ENCODE measurements at regions of chr3 and their contacts with region 1.

Region 1: GRCh38 chr3:8622873-8623691 is 21.5 kb downstream of the SSUH2 start:
- ATAC-seq: peak; percentile 96 to 100 (median 100)
- H3K4me3 ChIP-seq: no peak overlapping the region
- H3K27ac ChIP-seq: no peak overlapping the region
- H3K4me1 ChIP-seq: peaks cover 6 to 11% of the 10 kb centered on the region in 2 donors

Region 2: DNA sequence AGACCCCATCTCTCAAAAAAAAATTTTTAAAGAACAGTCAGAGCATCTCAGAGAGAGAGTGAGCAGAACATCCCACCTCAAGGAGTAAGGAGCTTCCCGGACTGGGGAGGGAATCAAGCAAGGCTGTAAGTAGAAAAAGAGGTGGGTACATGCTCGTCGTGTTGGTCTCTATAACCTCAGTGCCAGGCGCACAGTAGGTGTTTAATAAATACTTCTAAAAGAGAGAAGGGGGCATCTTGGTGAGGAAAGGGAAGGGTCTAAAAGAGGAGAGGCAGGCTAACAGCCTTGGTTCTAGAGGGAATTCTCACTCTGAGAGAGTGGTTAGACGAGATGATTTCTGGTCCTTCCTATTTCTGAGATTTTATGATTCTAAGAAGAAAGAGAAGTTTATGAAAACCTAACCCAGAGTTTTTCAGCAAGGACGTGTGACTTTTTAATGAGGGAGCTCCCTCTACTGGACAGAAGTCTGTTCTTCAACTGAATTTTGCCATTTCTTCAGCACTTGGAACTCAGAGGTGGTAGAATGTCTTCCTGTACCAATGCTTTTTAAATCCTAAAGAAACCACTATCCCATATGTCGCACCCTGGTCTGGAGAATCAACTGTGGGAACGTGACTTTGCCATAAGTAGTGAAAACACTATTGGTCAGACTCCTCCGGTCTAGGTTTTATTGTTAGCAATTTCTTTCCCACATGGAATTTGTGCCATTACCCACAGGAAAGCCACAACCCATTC is 321.2 kb before region 1 on chr3:
- in situ Hi-C with region 1: loop called in 1 of 9 experiments (anchors 25 kb)
- ATAC-seq: peak in 4 of 8 experiments; percentile 33 to 67 (median 50)
- H3K4me3 ChIP-seq: no peak overlapping the region
- H3K27ac ChIP-seq: no peak overlapping the region
- H3K4me1 ChIP-seq: peaks cover 4 to 5% of the 10 kb centered on the region in 2 donors

Region 3: DNA sequence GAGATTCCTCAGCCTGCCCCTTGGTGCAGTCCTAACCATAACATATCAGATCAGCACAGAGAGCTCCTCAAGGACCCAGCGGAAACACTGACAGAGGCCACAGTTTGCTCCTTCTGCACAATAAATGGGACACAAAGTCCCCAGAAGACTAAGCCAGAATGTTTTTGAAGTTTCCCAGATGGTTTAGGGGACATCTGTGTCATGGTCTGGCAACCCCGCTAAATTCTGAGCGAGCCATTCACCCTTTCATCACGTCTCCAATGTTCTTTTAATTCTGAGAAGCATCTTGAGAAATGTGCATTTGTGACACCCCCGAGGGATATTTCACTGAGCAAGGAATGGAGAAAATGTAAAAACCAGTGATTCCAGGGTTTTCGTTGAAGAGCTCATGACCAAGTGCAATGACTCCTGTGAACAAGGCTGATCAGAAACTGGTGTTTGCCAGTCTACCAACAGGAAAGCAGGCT is 186.3 kb before region 1 on chr3:
- in situ Hi-C with region 1: loop called in 5 of 9 experiments (anchors 10 to 25 kb)
- ATAC-seq: peak in 2 of 8 experiments; percentile 41 to 63
- H3K4me3 ChIP-seq: no peak overlapping the region
- H3K27ac ChIP-seq: no peak overlapping the region
- H3K4me1 ChIP-seq: no peaks in the 10 kb centered on the region

Region 4: GRCh38 chr3:8441969-8442559 is 181.0 kb before region 1 on chr3:
- in situ Hi-C with region 1: loop called in 5 of 9 experiments (anchors 10 to 25 kb)
- ATAC-seq: peak in 3 of 8 experiments; percentile 6 to 58 (median 10)
- H3K4me3 ChIP-seq: no peak overlapping the region
- H3K27ac ChIP-seq: no peak overlapping the region
- H3K4me1 ChIP-seq: peaks cover 19% of the 10 kb centered on the region in 2 donors

Region 5: GRCh38 chr3:8776406-8776805 is 153.3 kb after region 1 on chr3:
- in situ Hi-C with region 1: no loop called
- ATAC-seq: no peak
- H3K4me3 ChIP-seq: no peak overlapping the region
- H3K27ac ChIP-seq: no peak overlapping the region
- H3K4me1 ChIP-seq: no peaks in the 10 kb centered on the region

Region 6: DNA sequence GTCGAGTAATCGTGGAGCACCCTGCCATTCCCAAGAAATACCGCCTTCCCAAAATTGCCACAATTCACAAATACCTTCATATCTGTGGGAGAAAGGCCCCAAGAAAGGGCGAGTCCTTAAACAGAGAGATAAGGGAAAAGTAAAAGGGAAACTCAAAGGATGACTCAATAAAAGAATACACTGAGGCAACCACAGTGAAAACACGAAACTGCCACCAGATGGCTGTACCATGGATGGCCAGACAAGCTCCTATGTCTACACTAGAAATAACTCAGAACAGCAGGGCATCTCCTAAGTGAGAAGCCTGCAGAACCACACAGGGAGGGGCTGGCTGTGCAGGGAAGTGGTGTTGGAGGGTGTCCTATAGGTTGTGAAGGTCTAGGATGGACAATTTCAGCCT is 601.4 kb after region 1 on chr3:
- in situ Hi-C with region 1: no loop called
- ATAC-seq: peak in 1 of 8 experiments; percentile 59
- H3K4me3 ChIP-seq: no peak overlapping the region
- H3K27ac ChIP-seq: no peak overlapping the region
- H3K4me1 ChIP-seq: peaks cover 37 to 54% of the 10 kb centered on the region in 2 donors

Measured in motor neuron (in vitro differentiated cells).